ENCODE measurements at regions of chr10 and their contacts with region 1.

Region 1: GRCh38 chr10:132571650-132572535 is 34.3 kb downstream of the INPP5A start:
- DNase-seq: peak in 3 of 9 donors; percentile 18 to 72 (median 36)
- ATAC-seq: peak; percentile 44
- H3K4me3 ChIP-seq: no peak overlapping the region
- H3K4me3 Mint-ChIP-seq: peak overlapping the region in 4 of 10 donors; percentile 56 to 79 (median 74)
- H3K27ac ChIP-seq: no peak overlapping the region
- H3K27ac Mint-ChIP-seq: peak overlapping the region in 6 of 9 donors; percentile 16 to 74 (median 70)
- H3K4me1 ChIP-seq: peaks cover 10 to 22% of the 10 kb centered on the region in 2 donors
- H3K4me1 Mint-ChIP-seq: peaks cover 2 to 31% (median 26%) of the 10 kb centered on the region in 7 donors
- H3K27me3 ChIP-seq: no peaks in the 10 kb centered on the region
- H3K27me3 Mint-ChIP-seq: peaks cover 0 to 2% (median 0%) of the 10 kb centered on the region in 5 donors

Region 2: GRCh38 chr10:132551093-132551807 is 20.6 kb before region 1 on chr10:
- CTCF ChIA-PET with region 1: no interaction called
- POLR2A ChIA-PET with region 1: no interaction called
- intact Hi-C with region 1: loop called in 1 of 2 experiments (anchors 1 kb)
- DNase-seq: peak in 4 of 9 donors; percentile 41 to 53 (median 50)
- ATAC-seq: peak; percentile 67
- H3K4me3 ChIP-seq: peak overlapping the region; percentile 51
- H3K4me3 Mint-ChIP-seq: peak overlapping the region in 9 of 10 donors; percentile 72 to 88 (median 80)
- H3K27ac ChIP-seq: peak overlapping the region; percentile 57
- H3K27ac Mint-ChIP-seq: peak overlapping the region; percentile 66 to 95 (median 79)
- H3K4me1 ChIP-seq: peaks cover 18 to 52% of the 10 kb centered on the region in 2 donors
- H3K4me1 Mint-ChIP-seq: peaks cover 29 to 51% (median 34%) of the 10 kb centered on the region in 7 donors
- H3K27me3 ChIP-seq: no peaks in the 10 kb centered on the region
- H3K27me3 Mint-ChIP-seq: no peaks in the 10 kb centered on the region

Region 3: GRCh38 chr10:132588301-132589013 is 16.6 kb after region 1 on chr10:
- CTCF ChIA-PET with region 1: no interaction called
- POLR2A ChIA-PET with region 1: no interaction called
- intact Hi-C with region 1: loop called in 1 of 2 experiments (anchors 2 kb)
- DNase-seq: peak in 4 of 9 donors; percentile 18 to 49 (median 22)
- ATAC-seq: peak; percentile 79
- H3K4me3 ChIP-seq: no peak overlapping the region
- H3K4me3 Mint-ChIP-seq: peak overlapping the region; percentile 57 to 85 (median 74)
- H3K27ac ChIP-seq: no peak overlapping the region
- H3K27ac Mint-ChIP-seq: peak overlapping the region in 7 of 9 donors; percentile 3 to 85 (median 69)
- H3K4me1 ChIP-seq: peaks cover 5 to 26% of the 10 kb centered on the region in 2 donors
- H3K4me1 Mint-ChIP-seq: peaks cover 47 to 86% (median 71%) of the 10 kb centered on the region in 7 donors
- H3K27me3 ChIP-seq: no peaks in the 10 kb centered on the region
- H3K27me3 Mint-ChIP-seq: peaks cover 0 to 2% (median 0%) of the 10 kb centered on the region in 5 donors

Region 4: GRCh38 chr10:132616170-132616995 is 44.5 kb after region 1 on chr10:
- CTCF ChIA-PET with region 1: no interaction called
- POLR2A ChIA-PET with region 1: no interaction called
- intact Hi-C with region 1: loop called in 1 of 2 experiments (anchors 1 kb)
- DNase-seq: peak in 8 of 9 donors; percentile 64 to 78 (median 70)
- ATAC-seq: peak; percentile 85
- H3K4me3 ChIP-seq: no peak overlapping the region
- H3K4me3 Mint-ChIP-seq: peak overlapping the region; percentile 1 to 83 (median 56)
- H3K27ac ChIP-seq: no peak overlapping the region
- H3K27ac Mint-ChIP-seq: peak overlapping the region; percentile 40 to 95 (median 88)
- H3K4me1 ChIP-seq: peaks cover 12 to 18% of the 10 kb centered on the region in 2 donors
- H3K4me1 Mint-ChIP-seq: peaks cover 22 to 38% (median 28%) of the 10 kb centered on the region in 7 donors
- H3K27me3 ChIP-seq: no peaks in the 10 kb centered on the region
- H3K27me3 Mint-ChIP-seq: peaks cover 0 to 11% (median 0%) of the 10 kb centered on the region in 5 donors

Measured in naive thymus-derived CD4-positive, alpha-beta T cell (primary cell).